ENCODE measurements at regions of chr17 and their contacts with region 1.

Region 1: GRCh38 chr17:6666077-6666521 is 14.5 kb downstream of the C17orf100 start:
- DNase-seq: peak; percentile 79
- CTCF ChIP-seq: peak; percentile 97

Region 2: GRCh38 chr17:5816491-5817070 is 849.5 kb before region 1 on chr17:
- CTCF ChIA-PET with region 1: no interaction called
- POLR2A ChIA-PET with region 1: no interaction called
- DNase-seq: no peak
- CTCF ChIP-seq: no peak

Region 3: GRCh38 chr17:6677158-6677831 is 11.2 kb after region 1 on chr17:
- CTCF ChIA-PET with region 1: interaction called, 26 read pairs
- POLR2A ChIA-PET with region 1: no interaction called
- DNase-seq: no peak
- CTCF ChIP-seq: no peak

Measured in GM10248 (cell line).